ENCODE measurements at regions of chr16 and their contacts with region 1.

Region 1: DNA sequence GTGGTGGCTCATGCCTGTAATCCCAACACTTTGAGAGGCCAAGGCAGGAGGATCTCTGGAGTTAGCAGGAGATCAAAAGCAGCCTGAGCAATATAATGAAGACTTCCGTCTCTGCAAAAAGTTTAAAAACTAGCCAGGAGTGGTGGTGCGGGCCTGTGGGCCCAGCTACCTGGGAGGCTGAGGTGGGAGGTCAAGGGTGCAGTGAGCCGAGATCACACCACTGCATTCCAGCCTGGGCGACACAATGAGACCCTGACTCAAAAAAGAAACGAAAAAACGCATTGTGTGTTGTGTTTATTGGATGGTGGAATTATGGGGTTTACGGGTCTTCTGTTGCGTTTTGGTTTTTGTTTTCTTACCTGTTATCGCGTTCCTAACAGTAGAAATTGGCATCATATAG is 863 bp upstream of the DDX19A start:
- DNase-seq: no peak
- ATAC-seq: no peak
- H3K4me3 ChIP-seq: peak overlapping the region; percentile 84
- H3K4me3 Mint-ChIP-seq: peak overlapping the region; percentile 94
- H3K27ac ChIP-seq: peak overlapping the region; percentile 98
- H3K27ac Mint-ChIP-seq: peak overlapping the region; percentile 95 to 98
- H3K4me1 ChIP-seq: peaks cover 19% of the 10 kb centered on the region
- H3K4me1 Mint-ChIP-seq: peaks cover 16 to 19% of the 10 kb centered on the region in 2 donors
- H3K27me3 ChIP-seq: no peaks in the 10 kb centered on the region
- H3K27me3 Mint-ChIP-seq: no peaks in the 10 kb centered on the region
- CTCF ChIP-seq: no peak

Region 2: DNA sequence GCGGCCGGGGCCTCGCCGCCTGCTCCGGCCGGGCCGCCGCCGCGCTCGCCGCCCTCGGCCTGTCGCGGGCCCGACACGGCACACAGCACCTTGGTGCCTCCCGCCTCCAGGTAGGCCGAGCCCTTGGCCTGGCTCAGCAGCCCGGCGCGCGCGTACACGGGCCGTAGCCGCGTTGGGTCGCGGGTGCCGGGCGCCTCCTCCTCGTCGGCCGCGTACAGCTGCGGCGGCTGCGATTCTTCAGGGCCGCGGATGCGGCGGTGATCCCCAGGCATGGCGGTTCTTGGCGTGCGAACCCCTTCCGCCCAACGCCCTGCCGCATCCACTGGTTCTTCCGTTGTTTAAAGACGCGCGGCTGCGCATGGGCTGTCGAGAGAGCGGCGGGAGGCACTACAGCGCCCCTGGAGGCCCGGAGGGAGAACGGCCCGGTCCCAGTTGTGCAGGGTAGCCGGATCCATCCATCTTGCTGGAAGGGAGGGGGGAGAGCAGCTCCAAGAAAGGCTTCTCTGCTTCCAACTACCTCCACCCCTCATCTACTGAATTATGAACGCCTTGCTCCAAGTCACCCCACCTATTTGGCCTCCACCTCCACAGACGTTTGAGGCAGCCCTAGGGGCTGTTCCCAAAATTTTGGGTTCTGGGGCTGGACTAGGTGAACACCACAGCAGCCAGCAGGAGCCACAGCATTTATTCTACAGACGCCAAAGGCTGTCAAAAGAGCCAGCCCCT is 94.0 kb before region 1 on chr16 and contains the start of gene EXOSC6:
- intact Hi-C with region 1: loop called (anchors 2 kb)
- DNase-seq: peak; percentile 89 to 97
- ATAC-seq: peak; percentile 91 to 98 (median 95)
- H3K4me3 ChIP-seq: peak within 1 kb of the TSS; percentile 19
- H3K4me3 Mint-ChIP-seq: peak within 1 kb of the TSS; percentile 91
- H3K27ac ChIP-seq: peak within 1 kb of the TSS; percentile 39
- H3K27ac Mint-ChIP-seq: peak within 1 kb of the TSS; percentile 83 to 93
- H3K4me1 ChIP-seq: peaks cover 24% of the 10 kb centered on the region
- H3K4me1 Mint-ChIP-seq: peaks cover 0 to 12% of the 10 kb centered on the region in 2 donors
- H3K27me3 ChIP-seq: no peaks in the 10 kb centered on the region
- H3K27me3 Mint-ChIP-seq: no peaks in the 10 kb centered on the region
- CTCF ChIP-seq: peak; percentile 88
- total RNA-seq, gene EXOSC6: 26.4 to 27.6 (median 27.3) TPM

Region 3: DNA sequence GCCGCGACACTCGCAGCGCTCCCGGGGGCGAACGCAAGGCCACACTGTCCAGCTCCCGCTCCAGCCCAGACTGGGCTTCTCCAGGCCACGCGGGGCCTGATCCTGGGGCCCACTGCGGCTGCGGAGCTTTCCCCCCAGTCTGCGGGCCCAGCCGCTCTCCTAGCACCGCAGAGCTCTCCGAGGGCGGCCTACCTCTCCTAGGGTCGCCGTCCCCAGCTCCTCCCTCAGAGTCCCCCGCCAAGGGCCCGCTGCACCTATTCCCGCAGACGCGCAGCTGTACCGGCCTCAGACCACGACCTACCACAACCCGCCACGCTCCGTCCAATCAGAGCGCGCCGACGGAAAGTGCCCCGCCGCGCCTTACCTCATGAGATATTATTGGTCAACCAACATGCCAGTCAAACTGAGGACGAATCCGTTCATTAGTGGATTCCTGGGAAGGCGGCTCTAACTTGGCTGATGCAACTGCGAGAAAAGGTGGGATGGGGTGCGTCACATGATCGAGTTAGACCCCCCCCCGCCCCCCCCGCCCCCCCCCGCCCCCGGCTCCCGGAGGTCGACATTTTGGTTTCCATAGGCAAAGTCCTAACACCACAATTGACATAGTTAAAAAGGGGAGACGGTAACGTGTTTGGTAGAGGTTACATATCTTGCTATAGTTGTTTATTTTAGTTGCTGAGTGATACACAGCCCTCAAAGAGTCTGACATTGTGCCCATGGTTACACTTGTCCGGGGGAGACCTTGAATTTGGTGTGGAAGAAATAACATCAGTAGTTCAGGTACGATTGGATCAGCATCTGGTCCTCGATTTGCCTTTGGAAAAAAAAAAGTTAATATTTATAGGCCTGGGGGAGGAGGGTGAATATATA is 56.4 kb before region 1 on chr16 and contains the start of gene AARS1:
- intact Hi-C with region 1: loop called (anchors 2 kb)
- DNase-seq: peak; percentile 90 to 99
- ATAC-seq: peak; percentile 94 to 98 (median 97)
- H3K4me3 ChIP-seq: peak within 1 kb of the TSS; percentile 78
- H3K4me3 Mint-ChIP-seq: peak within 1 kb of the TSS; percentile 100
- H3K27ac ChIP-seq: peak within 1 kb of the TSS; percentile 83
- H3K27ac Mint-ChIP-seq: peak within 1 kb of the TSS; percentile 97 to 100
- H3K4me1 ChIP-seq: peaks cover 16% of the 10 kb centered on the region
- H3K4me1 Mint-ChIP-seq: peaks cover 16 to 18% of the 10 kb centered on the region in 2 donors
- H3K27me3 ChIP-seq: no peaks in the 10 kb centered on the region
- H3K27me3 Mint-ChIP-seq: no peaks in the 10 kb centered on the region
- CTCF ChIP-seq: no peak
- total RNA-seq, gene AARS1: 19.8 to 29.9 (median 26.1) TPM

Region 4: GRCh38 chr16:70298988-70299938 is 46.6 kb before region 1 on chr16 and contains the start of gene DDX19B:
- intact Hi-C with region 1: loop called (anchors 2 kb)
- DNase-seq: peak; percentile 61 to 75
- ATAC-seq: peak; percentile 79 to 84 (median 84)
- H3K4me3 ChIP-seq: peak within 1 kb of the TSS; percentile 82
- H3K4me3 Mint-ChIP-seq: peak within 1 kb of the TSS; percentile 90
- H3K27ac ChIP-seq: peak within 1 kb of the TSS; percentile 92
- H3K27ac Mint-ChIP-seq: peak within 1 kb of the TSS; percentile 93 to 97
- H3K4me1 ChIP-seq: peaks cover 16% of the 10 kb centered on the region
- H3K4me1 Mint-ChIP-seq: peaks cover 38 to 42% of the 10 kb centered on the region in 2 donors
- H3K27me3 ChIP-seq: no peaks in the 10 kb centered on the region
- H3K27me3 Mint-ChIP-seq: no peaks in the 10 kb centered on the region
- CTCF ChIP-seq: no peak
- total RNA-seq, gene DDX19B: 39.9 to 52.6 (median 48.8) TPM

Region 5: GRCh38 chr16:70438969-70439862 is 93.4 kb after region 1 on chr16 and contains the start of gene ST3GAL2:
- intact Hi-C with region 1: no loop called
- DNase-seq: peak; percentile 85 to 95
- ATAC-seq: peak; percentile 96 to 99 (median 96)
- H3K4me3 ChIP-seq: peak within 1 kb of the TSS; percentile 66
- H3K4me3 Mint-ChIP-seq: peak within 1 kb of the TSS; percentile 96
- H3K27ac ChIP-seq: peak within 1 kb of the TSS; percentile 41
- H3K27ac Mint-ChIP-seq: peak within 1 kb of the TSS; percentile 74 to 89
- H3K4me1 ChIP-seq: peaks cover 25% of the 10 kb centered on the region
- H3K4me1 Mint-ChIP-seq: peaks cover 19 to 24% of the 10 kb centered on the region in 2 donors
- H3K27me3 ChIP-seq: no peaks in the 10 kb centered on the region
- H3K27me3 Mint-ChIP-seq: no peaks in the 10 kb centered on the region
- CTCF ChIP-seq: no peak
- total RNA-seq, gene ST3GAL2: 25.9 to 39.1 (median 36.9) TPM

Measured in natural killer cell (primary cell).